ENCODE measurements at regions of chr20 and their contacts with region 1.

Region 1: GRCh38 chr20:43448748-43449535 is 8.8 kb upstream of the SRSF6 start:
- DNase-seq: no peak
- ATAC-seq: peak; percentile 72
- H3K4me3 Mint-ChIP-seq: no peak overlapping the region
- H3K27ac Mint-ChIP-seq: no peak overlapping the region
- H3K4me1 Mint-ChIP-seq: peaks cover 3% of the 10 kb centered on the region
- H3K27me3 Mint-ChIP-seq: peaks cover 28% of the 10 kb centered on the region
- CTCF ChIP-seq: no peak

Region 2: DNA sequence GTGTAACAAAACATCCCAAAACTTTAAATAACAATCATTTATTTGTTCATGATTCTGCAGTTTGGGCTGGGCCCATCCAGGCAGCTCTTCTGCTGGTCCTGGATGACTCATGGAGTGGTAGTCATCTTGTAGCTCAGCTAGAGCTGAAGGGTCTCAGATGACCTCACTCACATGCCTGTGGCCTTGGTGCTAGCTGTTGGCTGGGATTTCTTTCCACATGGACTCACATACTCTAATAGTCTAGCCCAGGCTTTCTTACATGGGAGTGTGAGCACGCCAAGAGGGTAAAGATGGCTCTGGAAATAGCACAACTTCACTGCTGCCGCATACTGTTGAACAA is 69.4 kb before region 1 on chr20:
- CTCF ChIA-PET with region 1: no interaction called
- POLR2A ChIA-PET with region 1: no interaction called
- intact Hi-C with region 1: no loop called
- DNase-seq: no peak
- ATAC-seq: no peak
- H3K4me3 Mint-ChIP-seq: no peak overlapping the region
- H3K27ac Mint-ChIP-seq: no peak overlapping the region
- H3K4me1 Mint-ChIP-seq: no peaks in the 10 kb centered on the region
- H3K27me3 Mint-ChIP-seq: peaks cover 27% of the 10 kb centered on the region
- CTCF ChIP-seq: no peak

Region 3: DNA sequence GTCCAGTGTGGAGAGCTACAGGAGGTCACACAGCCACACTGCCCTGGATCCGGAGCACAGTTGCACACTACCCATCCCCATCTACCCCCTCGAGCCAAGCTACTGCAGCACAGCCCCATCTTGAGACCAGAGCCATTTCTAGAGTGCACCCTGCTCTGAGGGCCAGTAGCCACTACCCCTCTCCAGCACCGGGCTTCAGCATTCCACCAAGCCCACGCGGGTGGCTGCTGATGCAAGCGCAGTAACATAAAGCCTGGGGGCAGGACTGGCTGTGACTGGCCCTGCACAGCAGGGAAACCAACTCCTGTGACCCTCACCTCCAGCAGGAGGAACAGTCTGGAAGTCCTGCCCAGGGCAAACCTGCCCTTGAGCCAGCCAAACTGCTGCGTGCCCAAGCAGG is 32.9 kb before region 1 on chr20:
- CTCF ChIA-PET with region 1: no interaction called
- POLR2A ChIA-PET with region 1: no interaction called
- intact Hi-C with region 1: no loop called
- DNase-seq: no peak
- ATAC-seq: no peak
- H3K4me3 Mint-ChIP-seq: no peak overlapping the region
- H3K27ac Mint-ChIP-seq: no peak overlapping the region
- H3K4me1 Mint-ChIP-seq: no peaks in the 10 kb centered on the region
- H3K27me3 Mint-ChIP-seq: peaks cover 15% of the 10 kb centered on the region
- CTCF ChIP-seq: no peak

Region 4: DNA sequence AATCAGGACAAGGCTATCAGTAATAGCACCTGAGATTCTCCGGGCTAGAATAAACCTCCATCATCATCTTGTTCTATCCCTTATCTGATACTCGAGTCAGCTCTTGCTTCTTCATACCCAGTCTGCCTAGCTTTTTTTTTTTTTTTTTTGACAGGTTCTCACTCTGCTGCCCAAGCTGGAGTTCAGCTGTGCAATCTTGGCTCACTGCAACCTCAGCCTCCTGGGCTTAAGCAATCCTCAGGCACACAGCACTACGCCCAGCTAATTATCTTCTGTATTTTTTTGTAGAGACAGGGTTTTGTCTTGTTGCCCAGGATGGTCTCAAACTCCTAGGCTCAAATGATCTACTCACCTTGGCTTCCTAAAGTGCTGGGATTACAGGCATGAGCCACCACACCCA is 28.3 kb after region 1 on chr20:
- CTCF ChIA-PET with region 1: no interaction called
- POLR2A ChIA-PET with region 1: no interaction called
- intact Hi-C with region 1: no loop called
- DNase-seq: no peak
- ATAC-seq: no peak
- H3K4me3 Mint-ChIP-seq: no peak overlapping the region
- H3K27ac Mint-ChIP-seq: no peak overlapping the region
- H3K4me1 Mint-ChIP-seq: peaks cover 3% of the 10 kb centered on the region
- H3K27me3 Mint-ChIP-seq: peaks cover 7% of the 10 kb centered on the region
- CTCF ChIP-seq: no peak

Region 5: DNA sequence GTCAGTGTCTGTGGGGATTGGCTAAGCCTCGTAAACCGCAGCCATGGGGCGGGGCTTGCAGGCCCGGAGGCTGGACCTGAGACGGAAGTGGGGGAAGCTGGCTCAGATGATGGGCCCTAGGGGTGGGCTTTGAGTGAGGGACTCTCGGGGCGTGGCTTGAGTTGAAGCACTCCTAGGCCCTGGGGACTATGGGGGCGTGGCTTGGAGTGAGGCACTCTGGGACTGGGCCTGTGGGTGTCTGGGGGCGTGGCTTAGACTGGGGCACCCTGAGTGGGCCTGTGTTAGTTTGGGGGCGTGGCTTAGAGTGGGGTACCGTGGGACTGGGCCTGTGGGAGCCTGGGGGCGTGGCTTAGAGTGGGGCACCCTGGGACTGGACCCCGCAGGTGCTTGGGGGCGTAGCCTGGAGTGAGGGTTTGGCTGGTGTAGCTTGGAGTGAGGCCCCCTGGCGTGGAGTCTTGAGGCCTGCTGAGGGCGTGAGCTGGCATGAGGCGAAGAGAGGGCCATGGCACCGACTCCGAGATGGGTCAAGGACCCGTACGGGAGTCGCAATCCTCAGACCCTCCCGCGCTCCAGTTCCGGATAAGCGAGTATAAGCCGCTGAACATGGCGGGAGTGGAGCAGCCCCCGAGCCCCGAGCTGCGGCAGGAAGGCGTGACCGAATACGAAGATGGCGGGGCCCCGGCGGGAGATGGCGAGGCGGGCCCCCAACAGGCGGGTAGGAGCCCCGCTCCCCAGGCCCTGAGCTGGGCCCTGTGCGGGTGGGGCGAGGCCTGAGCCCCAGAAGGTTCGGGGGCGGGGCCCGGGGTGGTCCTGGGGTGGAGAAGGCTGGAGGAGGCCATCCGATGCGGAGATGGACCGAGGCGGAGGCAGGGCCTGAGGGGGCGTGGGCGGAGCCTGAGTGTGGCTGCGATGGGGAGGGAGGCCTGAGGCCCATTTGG is 65.4 kb after region 1 on chr20:
- CTCF ChIA-PET with region 1: interaction called, 4 read pairs
- POLR2A ChIA-PET with region 1: no interaction called
- intact Hi-C with region 1: loop called (anchors 1 kb)
- DNase-seq: peak; percentile 83
- ATAC-seq: peak; percentile 89
- H3K4me3 Mint-ChIP-seq: peak overlapping the region; percentile 93
- H3K27ac Mint-ChIP-seq: peak overlapping the region; percentile 88
- H3K4me1 Mint-ChIP-seq: peaks cover 22% of the 10 kb centered on the region
- H3K27me3 Mint-ChIP-seq: peaks cover 11% of the 10 kb centered on the region
- CTCF ChIP-seq: no peak

Region 6: DNA sequence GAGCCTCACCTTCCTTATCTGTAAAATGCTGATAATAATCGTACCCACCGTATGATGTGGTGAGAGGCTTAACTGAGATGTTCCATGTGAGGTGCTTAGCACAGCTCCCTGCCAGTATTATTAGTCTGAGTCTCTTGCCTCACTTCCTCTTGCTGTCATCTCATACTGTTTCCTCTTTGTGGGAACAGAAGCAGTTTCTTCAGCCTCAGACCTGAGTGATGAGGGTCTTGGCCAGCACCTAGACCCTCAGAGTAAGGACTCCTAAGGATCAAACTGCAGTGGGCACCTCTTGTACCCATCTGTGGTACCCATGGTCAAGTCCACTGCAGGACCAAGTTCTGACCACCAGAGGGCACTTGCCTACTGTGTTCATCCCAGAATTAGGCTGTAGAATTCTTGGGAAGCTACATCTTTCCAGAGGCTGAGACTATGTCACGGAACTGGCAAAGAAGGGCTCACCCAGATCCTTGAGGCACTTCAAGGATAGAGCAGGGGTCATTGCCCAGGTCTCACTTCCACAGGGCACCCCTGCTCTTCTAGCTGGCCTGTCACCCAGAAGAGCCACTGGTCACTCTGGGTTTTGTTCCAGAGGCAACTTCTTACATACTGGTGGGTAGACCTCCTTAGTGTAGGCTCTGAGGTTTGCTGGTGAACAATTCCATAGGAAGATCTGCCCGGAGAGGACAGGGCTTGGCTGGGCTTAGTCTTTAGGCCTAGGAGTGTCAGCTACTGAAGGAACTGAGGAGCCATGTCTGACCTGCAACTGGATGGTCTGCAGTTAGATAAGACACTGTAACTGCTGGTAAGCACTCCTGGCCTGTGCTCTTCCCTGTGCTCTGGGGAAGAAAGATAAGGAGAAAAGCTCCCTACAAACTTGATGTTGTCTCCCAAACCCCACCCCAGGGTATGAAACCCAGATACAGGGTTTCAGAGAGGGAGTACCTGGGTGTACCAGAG is 89.3 kb after region 1 on chr20:
- CTCF ChIA-PET with region 1: no interaction called
- POLR2A ChIA-PET with region 1: no interaction called
- intact Hi-C with region 1: loop called (anchors 1 kb)
- DNase-seq: peak; percentile 30
- ATAC-seq: peak; percentile 65
- H3K4me3 Mint-ChIP-seq: no peak overlapping the region
- H3K27ac Mint-ChIP-seq: no peak overlapping the region
- H3K4me1 Mint-ChIP-seq: no peaks in the 10 kb centered on the region
- H3K27me3 Mint-ChIP-seq: no peaks in the 10 kb centered on the region
- CTCF ChIP-seq: peak; percentile 52

Region 7: GRCh38 chr20:43691928-43692524 is 243.1 kb after region 1 on chr20:
- CTCF ChIA-PET with region 1: interaction called, 10 read pairs
- POLR2A ChIA-PET with region 1: interaction called, 6 read pairs
- intact Hi-C with region 1: loop called (anchors 1 kb)
- DNase-seq: peak; percentile 63
- ATAC-seq: peak; percentile 89
- H3K4me3 Mint-ChIP-seq: no peak overlapping the region
- H3K27ac Mint-ChIP-seq: peak overlapping the region; percentile 6
- H3K4me1 Mint-ChIP-seq: peaks cover 21% of the 10 kb centered on the region
- H3K27me3 Mint-ChIP-seq: no peaks in the 10 kb centered on the region
- CTCF ChIP-seq: peak; percentile 38

Region 8: GRCh38 chr20:43702502-43702901 is 253.6 kb after region 1 on chr20:
- CTCF ChIA-PET with region 1: no interaction called
- POLR2A ChIA-PET with region 1: no interaction called
- intact Hi-C with region 1: no loop called
- DNase-seq: no peak
- ATAC-seq: no peak
- H3K4me3 Mint-ChIP-seq: no peak overlapping the region
- H3K27ac Mint-ChIP-seq: no peak overlapping the region
- H3K4me1 Mint-ChIP-seq: no peaks in the 10 kb centered on the region
- H3K27me3 Mint-ChIP-seq: no peaks in the 10 kb centered on the region
- CTCF ChIP-seq: no peak

Region 9: DNA sequence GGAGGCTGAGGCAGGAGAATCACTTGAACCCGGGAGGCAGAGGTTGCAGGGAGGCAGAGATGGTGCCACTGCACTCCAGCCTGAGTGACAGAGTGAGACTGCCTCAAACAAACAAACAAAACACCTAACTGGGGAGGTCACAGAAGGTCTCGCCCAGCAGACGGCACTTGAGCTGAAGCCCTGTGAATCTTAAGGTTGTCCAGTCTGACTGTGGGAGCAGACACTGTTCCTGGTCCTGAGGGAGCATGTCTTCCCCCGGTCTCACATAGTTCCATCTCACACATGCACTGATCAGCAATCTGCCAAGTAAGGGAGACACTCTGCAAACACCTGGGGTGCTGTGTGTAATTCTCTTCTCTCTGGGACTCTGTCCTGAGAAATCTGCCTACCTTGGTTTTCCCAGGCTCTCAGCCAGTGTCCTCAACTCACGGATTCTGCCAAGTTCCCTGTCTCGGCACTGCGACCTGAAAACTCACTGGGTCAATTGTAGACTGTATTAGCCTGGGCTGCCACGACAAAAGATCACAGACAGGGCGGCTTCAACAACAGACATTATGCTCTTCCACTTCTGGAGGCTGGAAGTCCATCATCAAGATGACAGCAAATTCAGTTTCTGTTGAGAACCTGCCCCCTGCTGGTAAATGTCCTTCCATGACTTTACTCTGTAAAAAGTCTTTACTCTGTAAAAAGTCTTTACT is 643.8 kb after region 1 on chr20:
- CTCF ChIA-PET with region 1: no interaction called
- POLR2A ChIA-PET with region 1: no interaction called
- intact Hi-C with region 1: loop called (anchors 1 kb)
- DNase-seq: no peak
- ATAC-seq: no peak
- H3K4me3 Mint-ChIP-seq: no peak overlapping the region
- H3K27ac Mint-ChIP-seq: no peak overlapping the region
- H3K4me1 Mint-ChIP-seq: peaks cover 3% of the 10 kb centered on the region
- H3K27me3 Mint-ChIP-seq: peaks cover 21% of the 10 kb centered on the region
- CTCF ChIP-seq: no peak

Region 10: GRCh38 chr20:44187051-44187762 is 738.3 kb after region 1 on chr20 and contains the start of gene JPH2:
- CTCF ChIA-PET with region 1: interaction called, 3 read pairs
- POLR2A ChIA-PET with region 1: no interaction called
- intact Hi-C with region 1: loop called (anchors 1 kb)
- DNase-seq: no peak
- ATAC-seq: peak; percentile 16
- H3K4me3 Mint-ChIP-seq: peak within 1 kb of the TSS; percentile 64
- H3K27ac Mint-ChIP-seq: no peak within 1 kb of the TSS
- H3K4me1 Mint-ChIP-seq: peaks cover 21% of the 10 kb centered on the region
- H3K27me3 Mint-ChIP-seq: peaks cover 41% of the 10 kb centered on the region
- CTCF ChIP-seq: no peak
- total RNA-seq, gene JPH2: not detected in 2 replicates